Cardiac septum (tissue), 1 donor: ENCODE measurements at regions of chr6 and their contacts with region 1.

Region 1: GRCh38 chr6:170286246-170286933 is 4.5 kb downstream of the DLL1 start:
- DNase-seq: peak; percentile 77

Region 2: GRCh38 chr6:170137176-170137891 is 149.1 kb before region 1 on chr6:
- intact Hi-C with region 1: loop called (anchors 5 kb)
- DNase-seq: peak; percentile 76